GM12878 (cell line): ENCODE measurements at regions of chr11 and their contacts with region 1.

Region 1: DNA sequence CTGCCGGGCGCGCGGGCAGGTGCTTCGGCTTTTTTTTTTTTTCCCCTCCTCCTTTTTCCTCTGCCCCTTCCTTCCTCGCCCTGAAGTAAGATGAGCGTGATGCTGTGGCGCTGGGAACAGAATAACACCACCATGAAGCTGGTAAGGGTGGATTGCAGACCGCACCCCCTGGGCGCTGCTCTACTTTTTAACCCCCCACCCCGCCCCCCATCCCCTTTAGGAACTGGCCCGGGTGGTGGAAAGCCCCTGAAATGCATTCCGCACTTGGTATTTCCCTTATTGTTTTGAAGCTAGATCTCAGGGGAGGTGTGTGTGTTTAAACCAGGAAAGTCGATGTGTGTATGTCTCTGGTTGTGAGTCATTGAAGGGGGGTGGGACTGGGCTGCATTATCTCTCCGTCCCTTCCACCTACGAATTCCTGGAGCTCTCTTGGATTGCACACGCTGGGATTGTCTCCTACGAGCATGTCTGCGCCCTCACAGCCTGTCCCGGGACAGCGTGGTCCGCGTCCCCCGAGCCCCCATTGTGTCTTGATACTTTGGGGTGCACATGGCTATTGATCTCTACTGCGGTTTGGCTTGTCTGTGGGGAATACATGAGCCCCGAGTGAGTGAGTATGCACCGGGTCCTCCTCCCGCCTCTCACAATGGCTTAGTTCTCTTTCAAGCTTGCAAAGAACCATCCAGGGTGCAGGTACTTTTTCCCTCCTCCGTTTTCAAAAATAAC is 64.9 kb downstream of the NAV2 start:
- DNase-seq: peak; percentile 65
- ATAC-seq: peak; percentile 83
- H3K4me3 ChIP-seq: peak overlapping the region; percentile 40
- H3K27ac ChIP-seq: peak overlapping the region; percentile 83
- H3K4me1 ChIP-seq: peaks cover 8% of the 10 kb centered on the region
- H3K27me3 ChIP-seq: no peaks in the 10 kb centered on the region
- CTCF ChIP-seq: peak in 1 of 3 experiments; percentile 4; a peak in 1 of 6 replicates
- EP300 ChIP-seq: peak; percentile 75 to 76
- POLR2A ChIP-seq: 0 out of 2 replicates have a peak, but pooled peaks have one; percentile 6
- RAD21 ChIP-seq: no peak

Region 2: DNA sequence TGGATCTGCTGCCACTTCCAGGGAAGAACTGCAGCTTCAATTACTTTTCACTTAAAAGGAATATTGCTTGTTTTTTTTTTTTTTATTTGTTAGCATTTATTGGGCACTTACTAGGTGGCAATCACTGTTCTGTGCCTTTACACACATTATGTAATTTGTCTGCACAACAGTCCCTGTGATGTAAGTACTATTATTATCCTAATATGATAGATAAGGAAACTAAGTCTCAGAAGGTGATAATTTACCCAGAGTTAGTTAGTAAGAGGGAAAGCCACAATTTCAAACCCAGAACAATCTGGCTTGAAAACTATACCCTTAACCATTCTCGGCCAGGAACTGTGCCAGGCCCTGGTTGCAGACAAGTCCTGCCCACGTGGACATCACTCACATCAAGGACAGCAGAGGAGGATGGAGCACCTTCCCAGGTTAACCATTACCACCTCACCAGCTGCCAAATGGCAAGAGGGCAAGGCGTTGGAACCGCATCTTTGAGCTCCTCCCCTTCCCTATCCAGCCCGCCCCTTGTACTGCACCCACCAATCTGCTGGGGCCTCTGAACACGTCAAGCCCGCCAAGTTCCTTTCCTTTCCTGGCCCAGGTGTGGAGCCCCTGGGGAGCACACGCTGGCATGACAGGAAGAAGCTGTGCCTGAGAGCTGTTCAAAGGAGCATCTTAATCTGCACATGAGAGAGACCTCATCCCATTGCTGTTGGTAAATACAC is 13.5 kb after region 1 on chr11:
- CTCF ChIA-PET with region 1: interaction called, 4 read pairs
- POLR2A ChIA-PET with region 1: interaction called, 15 read pairs
- RAD21 ChIA-PET with region 1: interaction called, 37 read pairs
- SMC1A ChIA-PET with region 1: interaction called, 15 read pairs
- in situ Hi-C with region 1: no loop called
- intact Hi-C with region 1: no loop called
- DNase-seq: peak; percentile 28
- ATAC-seq: peak; percentile 93
- H3K4me3 ChIP-seq: no peak overlapping the region
- H3K27ac ChIP-seq: no peak overlapping the region
- H3K4me1 ChIP-seq: no peaks in the 10 kb centered on the region
- H3K27me3 ChIP-seq: no peaks in the 10 kb centered on the region
- CTCF ChIP-seq: no peak
- EP300 ChIP-seq: 0 out of 4 replicates have a peak, but pooled peaks of 1 of the 2 experiments have one; percentile 7
- POLR2A ChIP-seq: no peak
- RAD21 ChIP-seq: no peak

Region 3: GRCh38 chr11:19808076-19808911 is 30.8 kb after region 1 on chr11:
- CTCF ChIA-PET with region 1: no interaction called
- POLR2A ChIA-PET with region 1: interaction called, 3 read pairs
- RAD21 ChIA-PET with region 1: interaction called, 4 read pairs
- SMC1A ChIA-PET with region 1: interaction called, 11 read pairs
- in situ Hi-C with region 1: no loop called
- intact Hi-C with region 1: no loop called
- DNase-seq: no peak
- ATAC-seq: no peak
- H3K4me3 ChIP-seq: no peak overlapping the region
- H3K27ac ChIP-seq: no peak overlapping the region
- H3K4me1 ChIP-seq: no peaks in the 10 kb centered on the region
- H3K27me3 ChIP-seq: no peaks in the 10 kb centered on the region
- CTCF ChIP-seq: peak in 1 of 3 experiments; percentile 52; a peak in 2 of 6 replicates
- EP300 ChIP-seq: no peak
- POLR2A ChIP-seq: no peak
- RAD21 ChIP-seq: peak; percentile 43; the same call in 1 of the 2 replicates